Adrenal gland (tissue), 19 donors: ENCODE measurements at regions of chr4 and their contacts with region 1.

Region 1: DNA sequence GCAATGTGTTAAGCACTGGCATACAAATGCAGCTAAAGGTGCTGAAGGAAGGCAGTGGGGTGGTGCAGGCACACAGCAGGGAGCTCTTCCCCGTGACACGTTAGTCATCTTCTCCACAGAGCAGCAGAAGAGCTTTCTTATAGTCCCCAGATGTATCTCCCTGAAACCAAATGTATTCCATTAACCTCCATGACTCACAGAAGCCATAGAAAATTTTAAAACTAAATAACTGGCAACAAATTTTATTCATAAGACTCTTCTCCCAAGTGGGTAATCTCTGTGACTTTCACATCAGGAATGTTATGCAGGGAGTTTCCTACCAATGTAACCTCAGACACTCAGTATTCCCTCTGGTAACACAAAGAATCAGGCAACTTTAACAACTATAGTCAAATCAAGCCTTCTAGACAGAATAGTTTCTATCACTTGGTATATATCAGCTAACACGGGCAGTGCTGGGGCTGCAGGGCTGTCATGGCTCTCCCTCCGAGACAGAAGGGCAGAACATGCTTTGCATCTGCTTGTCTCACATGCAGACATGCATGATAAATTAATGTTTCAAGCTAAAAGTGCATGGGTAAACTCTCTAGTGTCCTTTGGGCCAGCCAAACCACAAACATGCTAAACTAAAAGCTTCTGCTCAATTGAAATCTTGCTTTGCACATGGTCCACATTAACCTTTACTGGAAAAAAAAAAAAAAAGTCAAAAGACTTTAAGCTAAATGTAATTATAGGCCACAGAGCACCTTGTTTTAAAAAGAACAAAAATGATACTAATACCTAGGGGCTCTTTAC is 28.2 kb downstream of the ANXA5 start:
- DNase-seq: no peak
- H3K4me3 ChIP-seq: no peak overlapping the region
- H3K27ac ChIP-seq: peak overlapping the region in 2 of 5 donors; percentile 14 to 40
- H3K4me1 ChIP-seq: no peaks in the 10 kb centered on the region
- H3K27me3 ChIP-seq: no peaks in the 10 kb centered on the region
- CTCF ChIP-seq: no peak
- POLR2A ChIP-seq: no peak

Region 2: DNA sequence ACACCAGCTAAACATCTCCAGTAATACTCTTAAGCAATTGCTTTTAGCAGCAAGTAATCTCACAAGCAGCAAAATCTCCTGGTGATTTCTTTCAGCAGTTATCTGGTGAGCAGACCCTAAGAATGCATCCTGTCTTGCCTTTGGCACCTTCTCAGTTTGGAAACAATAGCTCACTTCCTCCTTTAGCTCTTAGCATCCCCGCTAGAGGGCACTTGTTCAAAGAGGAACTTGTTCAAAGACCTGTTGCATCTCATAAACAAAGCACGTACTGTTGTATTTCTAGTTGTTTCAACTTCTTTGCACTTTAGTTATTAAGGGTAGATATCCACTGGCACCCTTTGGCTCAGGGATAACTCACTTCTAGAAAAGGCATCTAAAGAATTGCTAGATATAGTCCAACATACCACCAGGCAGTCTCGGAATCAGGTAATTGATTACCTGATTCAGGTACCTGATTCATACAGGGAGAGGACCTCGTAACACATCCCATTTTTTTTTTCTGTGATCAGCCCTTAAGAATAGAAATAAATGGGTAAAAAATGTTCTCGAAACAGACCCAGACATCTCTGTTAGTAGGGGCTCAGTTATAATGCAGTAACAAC is 205.8 kb before region 1 on chr4:
- intact Hi-C with region 1: loop called in 1 of 2 experiments (anchors 10 kb)
- DNase-seq: peak; percentile 44 to 72 (median 70)
- H3K4me3 ChIP-seq: no peak overlapping the region
- H3K27ac ChIP-seq: no peak overlapping the region
- H3K4me1 ChIP-seq: no peaks in the 10 kb centered on the region
- H3K27me3 ChIP-seq: no peaks in the 10 kb centered on the region
- CTCF ChIP-seq: peak; percentile 45 to 68 (median 59)
- POLR2A ChIP-seq: no peak